ENCODE measurements at regions of chr5 and their contacts with region 1.

Region 1: GRCh38 chr5:62460578-62460983 is 48.0 kb downstream of the IPO11 start:
- DNase-seq: peak in 1 of 7 donors; percentile 8
- H3K4me3 ChIP-seq: no peak overlapping the region
- H3K27ac ChIP-seq: no peak overlapping the region
- H3K4me1 ChIP-seq: no peaks in the 10 kb centered on the region
- H3K27me3 ChIP-seq: no peaks in the 10 kb centered on the region
- CTCF ChIP-seq: peak; percentile 62 to 83 (median 76)
- POLR2A ChIP-seq: no peak

Region 2: DNA sequence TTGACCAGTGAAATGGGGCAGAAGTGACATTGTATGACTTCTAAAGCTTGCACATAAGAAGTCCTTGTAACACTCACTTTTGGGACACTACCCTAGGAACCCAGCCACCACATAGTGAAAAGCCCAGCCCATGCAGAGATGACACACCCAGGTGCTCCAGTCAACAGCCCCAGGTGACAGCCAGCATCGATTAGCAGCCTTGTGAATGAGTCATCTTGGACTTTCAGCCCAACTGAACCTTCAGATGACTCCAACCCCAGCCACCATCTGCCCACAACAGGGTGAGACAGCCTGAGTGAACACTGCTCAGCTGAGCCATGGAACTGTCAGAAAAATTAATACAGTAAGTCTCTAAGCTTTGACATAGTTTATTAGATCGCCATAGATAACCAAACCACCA is 669.9 kb before region 1 on chr5:
- intact Hi-C with region 1: no loop called
- DNase-seq: peak in 1 of 7 donors; percentile 52
- H3K4me3 ChIP-seq: no peak overlapping the region
- H3K27ac ChIP-seq: no peak overlapping the region
- H3K4me1 ChIP-seq: no peaks in the 10 kb centered on the region
- H3K27me3 ChIP-seq: no peaks in the 10 kb centered on the region
- CTCF ChIP-seq: no peak
- POLR2A ChIP-seq: no peak

Region 3: DNA sequence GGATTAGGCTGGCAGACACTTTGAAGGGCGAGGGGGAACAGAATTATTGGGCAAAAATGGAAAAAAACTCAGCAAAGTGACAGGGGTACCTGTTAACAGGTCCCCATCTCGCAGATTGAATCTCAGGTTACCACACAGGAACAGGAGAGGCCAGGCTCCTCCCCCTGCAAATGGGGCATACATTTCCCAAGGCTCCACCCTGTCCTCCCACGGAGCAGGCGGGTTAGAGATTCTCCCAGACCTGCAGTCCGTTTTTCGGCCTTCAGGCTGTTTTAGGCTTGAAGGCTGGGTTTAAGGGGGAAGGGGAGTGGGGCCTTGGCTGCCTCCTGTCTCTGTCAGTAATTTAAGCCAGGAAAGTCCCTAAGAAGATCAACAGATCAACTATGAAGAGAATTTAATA is 160.7 kb after region 1 on chr5:
- intact Hi-C with region 1: loop called in 1 of 2 experiments (anchors 10 kb)
- DNase-seq: no peak
- H3K4me3 ChIP-seq: no peak overlapping the region
- H3K27ac ChIP-seq: no peak overlapping the region
- H3K4me1 ChIP-seq: no peaks in the 10 kb centered on the region
- H3K27me3 ChIP-seq: no peaks in the 10 kb centered on the region
- CTCF ChIP-seq: no peak
- POLR2A ChIP-seq: no peak

Region 4: DNA sequence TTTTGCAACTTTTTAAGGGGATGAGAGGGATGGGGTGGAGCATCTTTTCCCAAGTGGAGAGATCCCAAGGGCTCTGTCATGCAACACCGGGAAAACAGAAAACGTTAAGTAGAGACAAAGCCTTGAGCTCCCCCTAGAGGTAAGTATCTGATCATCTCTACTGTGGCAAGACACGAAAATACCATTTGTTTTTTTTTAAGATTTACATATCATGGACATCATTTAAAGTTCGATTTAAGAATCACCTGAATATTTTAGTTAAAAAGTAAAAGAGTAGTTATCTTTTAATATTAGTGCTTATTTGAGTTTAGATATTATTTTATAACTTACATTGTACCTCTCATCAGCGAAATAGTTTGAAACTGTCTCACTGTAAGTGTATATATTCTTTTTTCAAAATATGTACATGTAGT is 318.4 kb after region 1 on chr5:
- intact Hi-C with region 1: loop called (anchors 5 kb)
- DNase-seq: peak in 5 of 7 donors; percentile 12 to 32 (median 30)
- H3K4me3 ChIP-seq: no peak overlapping the region
- H3K27ac ChIP-seq: no peak overlapping the region
- H3K4me1 ChIP-seq: no peaks in the 10 kb centered on the region
- H3K27me3 ChIP-seq: no peaks in the 10 kb centered on the region
- CTCF ChIP-seq: peak; percentile 56 to 80 (median 70)
- POLR2A ChIP-seq: no peak

Measured in adrenal gland (tissue), 19 donors.